Caco-2 (cell line): ENCODE measurements at regions of chr5 and their contacts with region 1.

Region 1: GRCh38 chr5:923281-923873 is 30.7 kb downstream of the TRIP13 start:
- DNase-seq: peak; percentile 87 to 92
- H3K4me3 ChIP-seq: no peak overlapping the region
- H3K4me3 Mint-ChIP-seq: no peak overlapping the region
- H3K27ac Mint-ChIP-seq: no peak overlapping the region
- H3K4me1 ChIP-seq: peaks cover 25% of the 10 kb centered on the region
- H3K4me1 Mint-ChIP-seq: peaks cover 35% of the 10 kb centered on the region
- H3K27me3 ChIP-seq: no peaks in the 10 kb centered on the region
- H3K27me3 Mint-ChIP-seq: no peaks in the 10 kb centered on the region
- CTCF ChIP-seq: peak; percentile 93 to 97

Region 2: DNA sequence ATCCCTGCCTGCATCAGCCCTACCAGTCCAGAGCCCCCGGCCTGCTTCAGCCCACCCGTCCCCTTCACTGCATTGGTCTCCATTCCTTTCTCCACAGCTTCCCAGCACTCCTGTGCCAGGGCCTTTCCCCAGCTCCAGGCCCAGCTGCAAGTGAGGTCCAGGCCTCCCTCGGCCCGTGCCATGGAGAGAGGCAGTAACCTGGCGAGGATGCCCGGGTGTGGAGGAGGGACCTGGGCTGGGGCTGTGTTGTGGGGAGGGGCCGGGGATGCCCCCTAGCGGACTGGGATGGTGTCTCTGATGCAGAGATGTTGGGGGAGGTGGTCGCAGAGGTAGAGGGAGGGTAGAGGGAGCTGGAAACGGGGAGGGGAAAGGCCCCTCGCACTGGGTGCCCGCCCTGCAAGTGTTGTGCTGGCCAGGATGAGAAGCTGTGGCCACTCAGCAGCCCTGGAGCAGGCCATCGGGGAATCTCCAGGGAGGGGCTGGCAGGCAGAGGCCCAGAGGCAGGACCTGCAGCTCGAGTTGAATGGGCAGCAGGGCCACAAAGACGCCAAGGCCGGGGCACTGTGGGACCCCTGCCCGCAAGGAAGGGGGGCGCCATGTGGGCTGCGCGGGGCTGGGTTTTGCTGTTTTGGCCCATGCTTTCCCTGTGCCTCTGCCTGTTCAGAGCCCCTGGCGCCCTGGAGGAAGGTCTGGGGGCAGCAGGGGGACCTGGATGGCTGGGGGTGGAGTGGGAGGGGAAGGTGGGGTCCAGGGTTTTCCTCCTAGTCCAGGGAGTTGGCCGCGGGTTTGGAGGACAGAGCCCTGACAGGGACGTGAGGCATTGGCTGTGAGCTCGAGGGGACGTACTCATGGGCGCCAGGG is 59.2 kb after region 1 on chr5:
- CTCF ChIA-PET with region 1: interaction called, 7 read pairs
- POLR2A ChIA-PET with region 1: no interaction called
- intact Hi-C with region 1: loop called (anchors 1 kb)
- DNase-seq: peak in 1 of 2 experiments; percentile 47
- H3K4me3 ChIP-seq: no peak overlapping the region
- H3K4me3 Mint-ChIP-seq: no peak overlapping the region
- H3K27ac Mint-ChIP-seq: no peak overlapping the region
- H3K4me1 ChIP-seq: peaks cover 9% of the 10 kb centered on the region; the same call in 1 of the 2 replicates
- H3K4me1 Mint-ChIP-seq: no peaks in the 10 kb centered on the region
- H3K27me3 ChIP-seq: no peaks in the 10 kb centered on the region
- H3K27me3 Mint-ChIP-seq: no peaks in the 10 kb centered on the region
- CTCF ChIP-seq: peak in 1 of 2 experiments; percentile 39

Region 3: DNA sequence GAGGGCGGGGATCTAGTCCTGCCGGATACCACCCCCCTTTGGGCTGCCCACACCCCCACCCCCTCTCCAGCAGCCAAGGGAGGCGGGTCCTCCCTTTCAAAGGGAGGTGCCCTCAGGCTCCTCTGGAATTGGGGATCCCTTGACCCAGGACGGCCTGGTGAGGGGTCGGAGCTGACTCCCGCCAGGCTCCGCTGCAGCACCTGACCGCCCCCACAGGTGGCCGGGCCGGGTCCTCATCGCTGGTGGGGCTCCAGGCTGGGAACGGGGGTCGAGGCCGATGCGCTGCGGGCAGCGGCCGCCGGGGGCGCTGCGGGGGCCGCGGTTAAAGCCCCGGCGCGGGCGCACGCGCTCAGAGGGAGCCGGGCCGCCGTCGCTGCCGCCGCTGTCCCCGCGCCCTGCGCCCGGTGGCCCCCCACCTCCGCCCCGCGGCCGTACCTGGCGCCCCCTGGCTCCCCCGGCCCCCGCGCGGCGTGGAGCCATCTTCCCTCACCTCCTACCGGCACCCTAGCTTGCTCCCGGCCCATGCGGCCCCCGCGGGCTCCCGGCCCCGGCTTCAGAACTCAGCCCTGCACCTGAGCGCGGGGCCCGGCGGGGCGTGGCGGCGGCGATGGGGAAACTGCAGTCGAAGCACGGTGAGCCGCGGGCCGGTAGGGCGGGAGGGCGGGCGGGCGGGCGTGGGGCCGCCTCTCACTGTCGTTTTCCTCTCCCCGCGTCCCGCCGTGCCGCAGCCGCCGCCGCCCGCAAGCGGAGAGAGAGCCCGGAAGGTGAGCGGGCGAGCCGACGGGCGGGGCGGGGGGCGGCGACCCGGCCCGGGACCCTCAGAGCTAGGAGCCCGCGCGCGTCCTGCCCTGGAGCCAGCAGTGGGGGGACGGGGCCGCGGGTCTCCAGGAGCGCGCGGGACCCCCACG is 85.3 kb after region 1 on chr5 and contains the start of gene NKD2:
- CTCF ChIA-PET with region 1: interaction called, 46 read pairs
- POLR2A ChIA-PET with region 1: no interaction called
- intact Hi-C with region 1: loop called (anchors 1 kb)
- DNase-seq: peak; percentile 39 to 76
- H3K4me3 ChIP-seq: peak within 1 kb of the TSS; percentile 50
- H3K4me3 Mint-ChIP-seq: peak within 1 kb of the TSS; percentile 63
- H3K27ac Mint-ChIP-seq: no peak within 1 kb of the TSS
- H3K4me1 ChIP-seq: peaks cover 36% of the 10 kb centered on the region
- H3K4me1 Mint-ChIP-seq: peaks cover 10% of the 10 kb centered on the region
- H3K27me3 ChIP-seq: no peaks in the 10 kb centered on the region
- H3K27me3 Mint-ChIP-seq: no peaks in the 10 kb centered on the region
- CTCF ChIP-seq: peak; percentile 39 to 81
- total RNA-seq, gene NKD2: 13.6 and 17.7 TPM in 2 replicates

Region 4: DNA sequence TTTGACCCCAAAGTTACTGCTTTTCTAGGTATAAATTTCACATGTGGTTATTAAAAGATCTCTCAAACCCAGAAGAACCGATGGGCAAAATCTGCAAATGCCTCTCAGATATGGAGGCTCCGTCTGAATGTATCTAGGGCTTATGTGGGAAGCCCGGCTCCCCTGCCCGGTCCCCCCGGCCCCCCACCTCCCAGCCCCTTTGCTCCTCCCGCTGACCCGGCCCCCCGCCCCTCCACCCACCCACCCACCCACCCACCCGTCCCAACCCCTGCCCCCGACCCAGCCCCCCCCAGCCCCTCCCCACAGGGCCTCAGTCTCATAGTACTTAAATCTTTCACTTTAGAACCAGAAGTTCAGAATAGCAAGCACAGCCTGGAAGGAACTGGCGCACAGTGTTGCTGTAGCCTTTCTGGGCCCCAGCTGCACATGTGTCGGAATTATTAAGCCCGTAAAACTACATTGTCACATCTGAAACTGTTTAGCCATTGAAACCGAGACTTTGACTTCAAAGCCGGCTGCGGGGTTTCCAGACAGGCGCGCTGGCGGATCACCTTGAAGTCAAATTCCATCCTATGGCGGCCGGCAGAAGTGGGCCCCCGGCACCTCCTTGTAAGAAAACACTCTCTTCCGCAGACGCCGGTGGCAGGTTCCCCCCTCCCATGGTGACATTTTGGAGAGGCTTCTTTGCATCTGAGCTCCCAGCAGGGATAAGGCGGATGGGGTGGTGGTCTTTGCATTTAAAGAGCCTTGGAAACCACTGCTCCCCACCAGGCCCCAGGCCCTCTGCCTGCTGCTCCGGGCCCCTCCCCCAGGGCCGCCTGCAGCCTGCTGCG is 98.0 kb after region 1 on chr5:
- CTCF ChIA-PET with region 1: interaction called, 12 read pairs
- POLR2A ChIA-PET with region 1: no interaction called
- intact Hi-C with region 1: no loop called
- DNase-seq: peak in 1 of 2 experiments; percentile 30
- H3K4me3 ChIP-seq: no peak overlapping the region
- H3K4me3 Mint-ChIP-seq: no peak overlapping the region
- H3K27ac Mint-ChIP-seq: no peak overlapping the region
- H3K4me1 ChIP-seq: 0 out of 2 replicates have a peak, but pooled peaks cover 3% of the 10 kb centered on the region
- H3K4me1 Mint-ChIP-seq: no peaks in the 10 kb centered on the region
- H3K27me3 ChIP-seq: no peaks in the 10 kb centered on the region
- H3K27me3 Mint-ChIP-seq: no peaks in the 10 kb centered on the region
- CTCF ChIP-seq: no peak

Region 5: GRCh38 chr5:1140171-1140817 is 216.9 kb after region 1 on chr5:
- CTCF ChIA-PET with region 1: interaction called, 5 read pairs
- POLR2A ChIA-PET with region 1: no interaction called
- intact Hi-C with region 1: loop called (anchors 1 kb)
- DNase-seq: peak; percentile 79 to 88
- H3K4me3 ChIP-seq: no peak overlapping the region
- H3K4me3 Mint-ChIP-seq: no peak overlapping the region
- H3K27ac Mint-ChIP-seq: no peak overlapping the region
- H3K4me1 ChIP-seq: peaks cover 7% of the 10 kb centered on the region; the same call in 1 of the 2 replicates
- H3K4me1 Mint-ChIP-seq: peaks cover 7% of the 10 kb centered on the region
- H3K27me3 ChIP-seq: no peaks in the 10 kb centered on the region
- H3K27me3 Mint-ChIP-seq: no peaks in the 10 kb centered on the region
- CTCF ChIP-seq: peak; percentile 92 to 93

Region 6: DNA sequence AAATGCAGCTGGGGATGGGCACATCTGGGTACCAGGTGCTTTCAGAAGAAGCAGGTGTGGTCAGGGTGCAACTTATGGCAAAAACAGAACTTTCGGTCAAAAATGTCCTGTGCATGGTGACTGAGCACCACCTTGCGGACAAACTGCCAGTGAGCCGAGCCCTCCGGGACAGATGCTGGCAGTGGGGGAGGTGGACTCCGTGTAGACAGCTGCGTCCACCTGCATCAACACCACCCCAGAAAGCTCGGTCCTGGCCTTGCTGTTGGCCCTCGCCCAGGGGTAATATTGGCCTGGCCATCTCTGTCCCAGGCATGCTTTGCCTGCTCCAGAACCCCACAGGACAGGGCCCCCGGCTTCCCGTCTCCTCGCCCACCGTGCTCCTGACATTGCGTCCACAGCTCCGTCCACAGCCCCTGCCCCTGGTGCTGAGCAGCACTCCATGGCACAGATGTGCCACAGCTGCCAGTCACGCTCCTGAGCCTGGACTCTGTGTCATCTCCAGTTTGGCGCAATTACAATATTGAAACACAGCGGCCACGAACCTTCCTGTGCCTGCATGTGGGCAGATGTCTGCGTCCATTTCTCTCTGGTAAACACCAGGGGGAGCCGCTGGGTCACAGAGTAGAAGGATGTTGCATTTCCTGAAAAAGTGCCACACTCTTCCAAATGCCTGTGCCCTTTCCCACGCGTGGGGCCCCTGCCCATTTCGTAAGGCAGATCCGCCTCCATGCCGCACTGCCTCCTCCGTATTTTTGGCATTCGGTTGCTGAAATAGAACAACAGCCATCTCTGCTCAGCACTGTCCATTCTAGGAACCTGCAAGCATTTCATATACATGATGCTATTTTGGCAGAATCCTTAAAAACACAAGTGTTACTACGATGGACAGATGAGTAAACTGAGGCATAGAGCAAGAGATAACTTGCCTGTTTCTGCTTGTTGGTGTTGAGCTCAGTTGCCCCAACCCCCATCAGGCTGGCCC is 244.6 kb after region 1 on chr5:
- CTCF ChIA-PET with region 1: interaction called, 12 read pairs
- POLR2A ChIA-PET with region 1: no interaction called
- intact Hi-C with region 1: loop called (anchors 1 kb)
- DNase-seq: peak; percentile 76 to 83
- H3K4me3 ChIP-seq: peak overlapping the region; percentile 35
- H3K4me3 Mint-ChIP-seq: peak overlapping the region; percentile 70
- H3K27ac Mint-ChIP-seq: no peak overlapping the region
- H3K4me1 ChIP-seq: no peaks in the 10 kb centered on the region
- H3K4me1 Mint-ChIP-seq: peaks cover 17% of the 10 kb centered on the region
- H3K27me3 ChIP-seq: no peaks in the 10 kb centered on the region
- H3K27me3 Mint-ChIP-seq: no peaks in the 10 kb centered on the region
- CTCF ChIP-seq: peak; percentile 70 to 94